ENCODE measurements at regions of chr10 and their contacts with region 1.

Region 1: DNA sequence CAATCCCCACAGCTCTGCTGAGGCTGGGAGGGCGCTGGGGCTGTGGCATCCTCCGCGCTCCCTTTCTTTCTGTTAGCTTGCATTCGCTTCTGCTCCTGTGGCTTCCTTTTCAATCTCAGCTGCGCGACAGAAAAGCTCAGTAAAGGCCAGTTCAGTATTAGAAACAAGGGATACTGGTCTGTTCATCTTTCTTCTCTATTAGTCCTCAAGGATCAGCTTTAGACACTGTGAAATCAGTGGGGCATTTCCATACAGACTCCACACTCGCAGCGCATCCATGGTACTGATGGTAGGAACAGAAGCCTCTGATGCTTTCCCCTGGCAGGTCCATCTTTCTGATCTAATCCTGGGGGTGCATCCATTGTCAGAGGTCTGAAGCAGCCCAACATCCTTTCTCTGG is 163.7 kb downstream of the LYZL1 start:
- DNase-seq: no peak
- ATAC-seq: no peak
- H3K4me3 ChIP-seq: no peak overlapping the region
- H3K27ac ChIP-seq: no peak overlapping the region
- H3K4me1 ChIP-seq: peaks cover 0 to 19% (median 15%) of the 10 kb centered on the region in 9 donors
- H3K27me3 ChIP-seq: no peaks in the 10 kb centered on the region
- CTCF ChIP-seq: no peak

Region 2: DNA sequence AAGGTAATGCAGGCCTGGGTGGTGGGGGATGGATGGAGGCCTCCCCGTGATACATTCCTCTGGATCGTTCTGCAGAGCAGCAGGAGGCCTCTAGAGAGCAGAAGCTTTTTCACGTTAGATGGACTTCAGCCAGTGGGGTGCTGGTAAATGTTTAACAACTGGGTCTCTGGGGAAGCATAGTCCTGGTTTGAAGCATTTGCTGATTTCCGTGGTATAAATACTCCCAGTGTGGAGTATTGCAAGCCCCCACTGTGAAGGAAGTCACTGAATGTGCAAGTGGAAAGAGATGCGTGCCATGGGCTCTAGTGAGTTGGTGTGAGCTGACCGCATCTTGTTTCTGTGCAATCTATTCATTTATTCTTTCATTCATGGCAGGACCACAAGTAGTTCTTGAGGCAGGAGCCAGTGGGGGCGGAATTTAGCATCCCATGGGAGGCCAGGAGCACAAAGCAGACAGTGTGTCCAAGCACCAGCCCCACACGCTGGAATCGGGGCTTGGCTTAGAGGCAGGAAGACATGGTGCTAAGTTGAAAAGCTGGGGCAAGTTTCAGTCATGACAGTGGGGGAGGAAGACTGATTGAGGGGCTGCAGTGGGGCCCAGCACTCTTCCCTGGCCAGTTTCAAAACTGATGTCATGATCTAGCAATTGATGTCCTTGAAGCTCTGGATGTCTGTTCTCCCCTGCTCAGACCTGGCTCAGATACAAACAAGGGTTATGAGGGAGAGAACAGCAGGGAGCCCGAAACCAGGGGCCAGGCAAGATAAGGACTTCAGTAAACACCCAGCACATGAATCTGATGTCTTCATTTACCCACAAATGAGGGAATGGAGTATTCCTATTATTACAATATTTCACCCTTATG is 444.6 kb before region 1 on chr10:
- intact Hi-C with region 1: no loop called
- DNase-seq: no peak
- ATAC-seq: peak in 2 of 8 donors; percentile 44 to 59
- H3K4me3 ChIP-seq: no peak overlapping the region
- H3K27ac ChIP-seq: no peak overlapping the region
- H3K4me1 ChIP-seq: no peaks in the 10 kb centered on the region
- H3K27me3 ChIP-seq: no peaks in the 10 kb centered on the region
- CTCF ChIP-seq: no peak

Region 3: GRCh38 chr10:29377333-29377961 is 75.1 kb before region 1 on chr10:
- intact Hi-C with region 1: loop called in 2 of 10 experiments (anchors 5 kb)
- DNase-seq: no peak
- ATAC-seq: peak in 1 of 8 donors; percentile 24
- H3K4me3 ChIP-seq: no peak overlapping the region
- H3K27ac ChIP-seq: no peak overlapping the region
- H3K4me1 ChIP-seq: no peaks in the 10 kb centered on the region
- H3K27me3 ChIP-seq: no peaks in the 10 kb centered on the region
- CTCF ChIP-seq: peak; percentile 50 to 78 (median 71)

Region 4: DNA sequence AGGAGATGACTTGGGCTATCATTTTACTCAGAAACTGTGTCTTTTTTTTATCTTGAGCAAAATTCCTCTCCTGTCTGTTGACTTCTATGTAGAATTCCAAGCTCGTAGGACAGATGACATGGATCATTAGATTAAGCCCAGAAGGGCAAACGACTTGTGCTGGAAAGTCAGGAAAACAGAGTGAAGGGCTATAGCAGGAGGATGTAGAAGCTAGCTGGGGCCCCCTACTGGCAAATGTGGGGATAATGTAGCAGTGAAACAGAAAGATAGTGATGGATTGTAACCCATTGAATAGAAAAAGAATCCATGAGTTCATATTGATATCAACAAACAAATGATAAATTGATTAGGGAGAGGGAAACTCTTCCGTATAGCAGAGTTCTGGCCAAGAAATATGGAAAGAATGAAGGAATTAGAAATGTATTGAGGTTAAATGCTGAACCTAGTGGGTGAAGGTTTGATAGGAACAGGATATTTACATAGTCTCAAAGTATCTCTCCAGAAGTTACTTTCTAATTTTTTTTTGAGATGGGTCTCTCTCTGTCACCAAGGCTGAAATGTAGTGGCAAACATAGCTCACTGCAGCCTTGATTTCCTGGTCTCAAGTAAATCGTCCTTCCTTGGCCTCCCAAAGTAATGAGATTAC is 60.0 kb before region 1 on chr10:
- intact Hi-C with region 1: loop called in 9 of 10 experiments (anchors 2 to 10 kb)
- DNase-seq: peak in 1 of 2 donors; percentile 15
- ATAC-seq: peak in 2 of 8 donors; percentile 42 to 67
- H3K4me3 ChIP-seq: no peak overlapping the region
- H3K27ac ChIP-seq: no peak overlapping the region
- H3K4me1 ChIP-seq: no peaks in the 10 kb centered on the region
- H3K27me3 ChIP-seq: no peaks in the 10 kb centered on the region
- CTCF ChIP-seq: peak; percentile 55 to 83 (median 74)

Measured in heart right ventricle (tissue), 16 donors.